Activated T-helper 1 cell treated with anti-CD3 and anti-CD28 coated beads, Interleukin-12 subunit alpha, Interleukin-12 subunit beta, Interleukin-2, Interleukin-4 antibody, amounts not matched to agents 30 ng/mL and 10 ng/mL and 1 ng/mL, durations not matched to agents 14 hours and 24 hours and 36 hours (primary cell): ENCODE measurements at regions of chr16 and their contacts with region 1.

Region 1: GRCh38 chr16:77308163-77308561 is 109.0 kb downstream of the SYCE1L start:
- DNase-seq: no peak
- H3K4me3 Mint-ChIP-seq: no peak overlapping the region
- H3K27ac Mint-ChIP-seq: peak overlapping the region; percentile 45
- H3K4me1 Mint-ChIP-seq: peaks cover 9% of the 10 kb centered on the region
- H3K27me3 Mint-ChIP-seq: no peaks in the 10 kb centered on the region

Region 2: DNA sequence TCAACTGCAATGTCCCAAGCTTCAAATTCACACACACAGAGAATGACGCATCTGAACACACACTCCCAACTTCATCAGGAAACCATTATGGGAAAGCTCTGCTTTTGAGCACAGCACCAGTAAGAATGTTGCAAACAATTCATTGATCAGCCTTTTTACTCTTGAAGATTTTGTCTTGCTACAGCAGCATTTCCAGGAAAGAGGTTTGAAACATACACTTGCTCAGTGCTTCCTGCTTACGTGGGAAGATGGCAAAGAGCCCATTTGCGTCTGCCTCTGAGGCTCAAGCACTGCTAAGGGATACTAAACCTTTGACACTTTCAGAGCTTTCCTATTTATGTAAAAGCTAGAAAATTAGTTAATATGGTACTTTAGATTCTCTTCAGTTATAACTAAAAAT is 194.3 kb before region 1 on chr16:
- intact Hi-C with region 1: no loop called
- DNase-seq: no peak
- H3K4me3 Mint-ChIP-seq: no peak overlapping the region
- H3K27ac Mint-ChIP-seq: no peak overlapping the region
- H3K4me1 Mint-ChIP-seq: no peaks in the 10 kb centered on the region
- H3K27me3 Mint-ChIP-seq: no peaks in the 10 kb centered on the region

Region 3: DNA sequence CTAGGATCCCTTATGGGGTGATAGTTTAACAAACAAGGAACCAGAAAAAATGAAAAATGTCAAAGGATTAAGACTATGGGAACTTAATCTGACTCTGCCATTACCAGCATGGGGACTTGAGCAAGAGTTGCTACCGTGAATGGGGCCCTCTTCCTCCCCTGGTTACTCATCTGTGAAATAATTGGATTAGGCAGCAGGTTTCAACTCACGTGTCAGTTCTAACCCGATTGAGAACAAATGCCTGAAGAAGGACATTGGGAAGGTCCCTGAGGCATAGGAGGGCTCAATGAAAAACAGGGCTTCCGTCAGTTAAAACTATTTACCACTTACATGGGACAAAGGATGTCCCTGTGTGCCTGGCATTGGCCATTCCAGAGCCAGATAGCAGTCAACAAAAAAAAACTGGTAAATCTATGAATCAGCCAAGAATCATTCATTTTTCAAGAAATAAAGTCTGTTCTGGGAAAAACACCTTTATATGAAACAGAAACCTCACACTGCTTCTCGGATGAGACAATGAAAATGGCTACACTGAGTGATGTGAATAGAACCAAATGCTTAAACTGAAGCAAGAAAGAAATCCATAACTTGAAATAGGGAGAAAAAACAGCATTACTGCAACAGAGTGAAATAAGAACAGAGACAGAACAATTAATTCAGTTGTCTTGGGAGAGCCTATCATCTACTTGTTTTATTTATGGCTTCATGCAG is 22.3 kb after region 1 on chr16:
- intact Hi-C with region 1: loop called (anchors 1 kb)
- DNase-seq: no peak
- H3K4me3 Mint-ChIP-seq: no peak overlapping the region
- H3K27ac Mint-ChIP-seq: peak overlapping the region; percentile 49
- H3K4me1 Mint-ChIP-seq: peaks cover 25% of the 10 kb centered on the region
- H3K27me3 Mint-ChIP-seq: no peaks in the 10 kb centered on the region

Region 4: DNA sequence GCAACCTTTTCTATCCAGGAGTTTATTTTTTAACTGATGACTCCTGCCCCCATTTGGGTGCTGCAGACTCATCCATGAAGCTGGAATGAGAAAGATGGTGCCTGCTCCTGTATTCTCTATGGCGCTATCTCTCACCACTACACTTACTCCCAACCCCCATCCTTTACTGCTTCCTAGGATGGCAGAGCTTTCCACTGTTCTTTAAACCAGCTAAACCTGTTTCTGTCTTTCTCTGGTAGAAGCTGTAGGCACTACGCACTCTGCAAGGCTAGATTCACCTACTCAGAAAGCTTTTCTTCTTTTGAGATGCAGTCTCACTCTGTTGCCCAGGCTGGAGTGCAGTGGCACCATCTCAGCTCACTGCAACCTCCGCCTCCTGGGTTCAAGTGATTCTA is 79.7 kb after region 1 on chr16:
- intact Hi-C with region 1: no loop called
- DNase-seq: no peak
- H3K4me3 Mint-ChIP-seq: no peak overlapping the region
- H3K27ac Mint-ChIP-seq: no peak overlapping the region
- H3K4me1 Mint-ChIP-seq: no peaks in the 10 kb centered on the region
- H3K27me3 Mint-ChIP-seq: no peaks in the 10 kb centered on the region